ENCODE measurements at regions of chr16 and their contacts with region 1.

Region 1: GRCh38 chr16:87278191-87279095 is 38.7 kb downstream of the C16orf95 start:
- DNase-seq: peak; percentile 78 to 91
- ATAC-seq: peak; percentile 97 to 100
- H3K4me3 ChIP-seq: no peak overlapping the region
- H3K27ac ChIP-seq: peak overlapping the region in 1 of 2 experiments; percentile 2; a peak in 1 of 6 replicates
- H3K4me1 ChIP-seq: 0 out of 3 replicates have a peak, but pooled peaks cover 5% of the 10 kb centered on the region
- CTCF ChIP-seq: peak; percentile 85
- EP300 ChIP-seq: no peak
- POLR2A ChIP-seq: no peak
- RAD21 ChIP-seq: peak; percentile 93 to 96

Region 2: DNA sequence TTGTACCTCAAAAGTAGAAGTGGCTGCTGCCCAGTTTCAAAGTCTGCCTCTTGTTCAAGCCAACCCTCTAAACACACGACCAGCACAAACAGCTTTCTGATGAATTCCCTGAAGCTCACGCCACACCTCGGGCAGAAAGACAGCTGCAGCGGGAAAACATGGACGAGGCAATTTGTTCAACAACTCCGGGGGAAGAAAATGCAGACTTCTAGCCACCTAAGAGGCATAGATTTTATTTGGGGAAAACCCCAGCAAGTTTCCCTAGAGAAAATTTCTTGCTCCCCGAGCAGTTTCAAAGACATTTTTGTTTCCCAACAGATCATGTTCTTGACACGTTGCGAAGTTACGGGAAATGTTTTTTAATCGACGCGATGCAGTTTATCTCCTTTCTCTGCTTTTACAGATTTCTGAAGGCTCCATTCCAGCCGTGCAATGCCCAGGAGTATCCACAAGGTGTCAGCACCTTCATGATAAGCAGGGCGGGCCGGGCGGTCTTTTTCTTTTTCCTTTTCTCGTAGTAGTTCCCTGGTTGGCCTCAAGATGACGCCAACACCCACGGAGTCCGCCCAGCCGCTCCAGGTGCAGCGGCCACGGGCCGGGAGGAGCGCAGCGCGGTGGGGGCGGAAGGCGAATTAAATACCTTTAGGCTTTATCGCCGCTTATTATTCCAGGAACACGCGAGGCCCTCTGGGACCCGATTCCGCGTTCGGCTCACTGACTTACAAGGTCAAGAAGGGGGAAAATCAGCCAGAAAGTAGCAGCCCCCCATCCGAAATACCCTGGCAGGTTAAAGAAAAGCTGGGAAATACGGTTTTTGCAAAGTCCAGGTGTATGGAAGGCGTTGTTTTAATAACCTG is 714.7 kb before region 1 on chr16:
- CTCF ChIA-PET with region 1: interaction called, 80 read pairs
- POLR2A ChIA-PET with region 1: no interaction called
- DNase-seq: peak; percentile 50 to 86
- ATAC-seq: peak; percentile 51 to 87; a peak in 5 of 6 replicates
- H3K4me3 ChIP-seq: peak overlapping the region; percentile 42
- H3K27ac ChIP-seq: peak overlapping the region; percentile 71 to 79
- H3K4me1 ChIP-seq: peaks cover 9% of the 10 kb centered on the region; the same call in 1 of the 3 replicates
- CTCF ChIP-seq: peak; percentile 100
- EP300 ChIP-seq: no peak
- POLR2A ChIP-seq: no peak
- RAD21 ChIP-seq: peak; percentile 100

Region 3: DNA sequence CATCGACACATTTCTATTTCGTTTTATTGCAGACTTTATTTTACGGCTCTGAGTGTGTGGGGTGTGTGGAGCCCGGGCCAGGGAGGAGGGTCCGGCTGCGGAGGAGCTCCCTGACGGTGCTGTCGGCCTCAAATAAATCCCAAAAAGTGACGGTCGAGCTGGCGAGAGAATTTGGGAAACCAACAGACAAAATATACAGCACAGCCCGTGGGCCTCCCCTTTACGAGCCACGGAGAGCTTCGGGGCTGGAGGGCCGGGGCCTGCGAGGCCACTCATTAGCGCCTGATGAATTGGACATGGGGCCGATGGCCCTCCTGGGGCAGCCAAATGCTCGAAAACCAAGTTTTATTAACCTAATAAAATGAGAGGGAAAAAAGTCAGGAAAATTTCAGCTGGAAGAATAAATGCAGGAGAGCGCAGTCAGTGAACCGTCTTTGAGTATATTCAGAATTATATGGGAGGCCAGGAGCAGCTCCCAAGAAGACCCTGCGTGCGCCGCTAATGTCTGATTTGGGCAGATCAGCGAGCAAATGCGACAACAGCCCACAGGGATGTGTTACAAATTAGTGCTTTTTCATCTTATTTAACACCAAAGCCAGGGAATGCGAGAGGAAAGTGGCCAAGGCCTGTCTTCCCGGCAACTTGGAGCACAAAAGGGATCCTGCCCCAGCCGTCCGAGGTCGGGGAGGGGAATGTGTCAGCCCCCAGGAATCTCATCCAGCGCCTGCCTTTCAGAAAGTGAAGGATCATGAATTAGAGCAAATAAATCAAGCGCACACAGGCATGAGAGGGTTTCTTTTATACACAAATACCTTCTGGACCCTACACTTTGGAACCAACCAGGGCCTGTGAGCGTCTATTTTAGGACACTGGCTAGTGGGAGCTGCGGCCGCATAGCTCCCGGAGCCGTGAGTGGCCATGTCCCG is 210.3 kb before region 1 on chr16:
- CTCF ChIA-PET with region 1: interaction called, 51 read pairs
- POLR2A ChIA-PET with region 1: no interaction called
- DNase-seq: no peak
- ATAC-seq: no peak
- H3K4me3 ChIP-seq: no peak overlapping the region
- H3K27ac ChIP-seq: no peak overlapping the region
- H3K4me1 ChIP-seq: no peaks in the 10 kb centered on the region
- CTCF ChIP-seq: no peak
- EP300 ChIP-seq: no peak
- POLR2A ChIP-seq: no peak
- RAD21 ChIP-seq: no peak

Region 4: DNA sequence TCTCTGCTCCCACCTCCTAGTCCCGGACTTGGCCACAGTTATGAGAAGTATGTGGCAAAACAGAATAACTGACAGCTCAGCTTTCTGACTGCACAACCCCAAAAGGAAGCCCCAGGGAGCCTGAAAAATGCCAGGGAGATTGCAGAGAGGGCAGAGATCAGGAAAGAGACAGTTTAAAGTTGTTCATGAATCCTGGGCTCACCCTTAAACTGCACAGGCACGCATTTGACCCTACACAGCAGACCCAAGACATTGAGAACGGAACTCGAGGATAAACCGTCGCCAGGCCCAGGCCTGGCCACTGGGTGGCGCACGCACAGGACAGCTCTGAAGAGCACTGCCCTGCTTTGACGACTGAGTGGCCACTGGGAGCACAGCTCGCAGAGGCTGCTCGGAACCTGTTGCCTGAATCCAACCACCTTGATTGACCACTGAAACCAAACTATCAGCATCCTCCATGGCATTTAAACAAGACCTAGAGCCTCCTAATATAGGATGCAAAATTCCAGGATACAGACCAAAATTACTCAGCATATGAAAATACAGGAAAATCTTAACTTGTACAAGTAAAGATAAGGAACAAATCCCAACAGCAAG is 75.3 kb before region 1 on chr16:
- CTCF ChIA-PET with region 1: interaction called, 73 read pairs
- POLR2A ChIA-PET with region 1: no interaction called
- DNase-seq: peak; percentile 84 to 91
- ATAC-seq: peak; percentile 80 to 92
- H3K4me3 ChIP-seq: no peak overlapping the region
- H3K27ac ChIP-seq: peak overlapping the region in 1 of 2 experiments; percentile 69; a peak in 3 of 6 replicates
- H3K4me1 ChIP-seq: peaks cover 30% of the 10 kb centered on the region
- CTCF ChIP-seq: peak; percentile 92
- EP300 ChIP-seq: no peak
- POLR2A ChIP-seq: no peak
- RAD21 ChIP-seq: peak; percentile 73 to 74

Region 5: DNA sequence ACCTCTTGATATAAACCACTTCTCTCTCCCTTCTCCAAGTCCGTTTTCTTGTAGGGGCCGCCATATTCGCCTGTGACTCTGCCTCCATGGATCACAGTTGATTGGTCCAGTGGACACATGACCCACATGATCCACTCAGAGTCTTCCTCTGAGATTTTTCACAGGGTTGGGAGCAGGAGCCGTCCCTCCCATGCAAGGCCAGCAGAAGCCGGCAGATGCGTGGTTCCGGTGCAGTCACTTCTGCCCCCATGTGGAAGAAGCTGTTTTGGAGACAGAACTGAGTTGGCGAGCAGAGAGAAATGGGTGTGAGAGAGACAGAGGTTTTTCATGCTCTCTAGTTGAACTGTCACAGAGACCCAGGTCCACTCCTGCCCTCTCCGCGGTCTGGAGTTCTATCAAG is 44.5 kb before region 1 on chr16:
- CTCF ChIA-PET with region 1: interaction called, 16 read pairs
- POLR2A ChIA-PET with region 1: no interaction called
- DNase-seq: peak in 1 of 2 experiments; percentile 36
- ATAC-seq: peak; percentile 51 to 69; a peak in 4 of 6 replicates
- H3K4me3 ChIP-seq: no peak overlapping the region
- H3K27ac ChIP-seq: no peak overlapping the region
- H3K4me1 ChIP-seq: no peaks in the 10 kb centered on the region
- CTCF ChIP-seq: no peak
- EP300 ChIP-seq: no peak
- POLR2A ChIP-seq: no peak
- RAD21 ChIP-seq: peak; percentile 27 to 55; a peak in 3 of 5 replicates

Region 6: DNA sequence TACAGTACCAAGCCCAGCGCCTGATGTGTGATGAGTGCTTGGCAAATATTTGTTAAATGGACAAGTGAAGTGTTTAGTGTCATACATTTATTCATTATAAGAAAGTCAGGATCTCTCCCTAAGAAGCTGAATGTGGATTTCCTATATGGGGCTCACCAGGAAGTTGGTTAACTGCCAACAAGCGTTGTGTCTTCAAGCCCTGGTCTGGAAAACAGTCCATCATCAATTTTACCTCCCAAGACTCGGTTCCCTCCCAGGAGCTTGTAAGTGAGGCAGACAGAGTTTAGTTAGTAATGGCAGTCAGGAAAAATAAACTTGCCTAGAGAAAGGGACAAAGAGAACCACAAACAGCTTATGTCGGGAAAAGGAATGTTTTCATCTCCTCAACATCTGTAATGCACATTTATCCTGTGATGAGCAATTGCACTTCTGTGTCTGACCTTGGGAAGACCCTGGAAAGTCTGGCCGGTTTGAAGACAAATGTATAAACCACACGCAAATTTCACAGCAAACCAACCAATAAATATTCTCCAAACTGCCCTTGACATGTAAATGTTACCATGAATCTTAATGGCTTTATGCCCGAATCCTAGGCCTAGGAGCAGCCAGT is 10.4 kb after region 1 on chr16:
- CTCF ChIA-PET with region 1: interaction called, 46 read pairs
- POLR2A ChIA-PET with region 1: no interaction called
- DNase-seq: no peak
- ATAC-seq: no peak
- H3K4me3 ChIP-seq: no peak overlapping the region
- H3K27ac ChIP-seq: no peak overlapping the region
- H3K4me1 ChIP-seq: no peaks in the 10 kb centered on the region
- CTCF ChIP-seq: no peak
- EP300 ChIP-seq: no peak
- POLR2A ChIP-seq: no peak
- RAD21 ChIP-seq: no peak

Region 7: GRCh38 chr16:87305505-87306391 is 27.3 kb after region 1 on chr16:
- CTCF ChIA-PET with region 1: interaction called, 15 read pairs
- POLR2A ChIA-PET with region 1: no interaction called
- DNase-seq: no peak
- ATAC-seq: peak in 1 of 2 experiments; percentile 69; a peak in 3 of 6 replicates
- H3K4me3 ChIP-seq: no peak overlapping the region
- H3K27ac ChIP-seq: no peak overlapping the region
- H3K4me1 ChIP-seq: no peaks in the 10 kb centered on the region
- CTCF ChIP-seq: no peak
- EP300 ChIP-seq: no peak
- POLR2A ChIP-seq: no peak
- RAD21 ChIP-seq: no peak

Region 8: DNA sequence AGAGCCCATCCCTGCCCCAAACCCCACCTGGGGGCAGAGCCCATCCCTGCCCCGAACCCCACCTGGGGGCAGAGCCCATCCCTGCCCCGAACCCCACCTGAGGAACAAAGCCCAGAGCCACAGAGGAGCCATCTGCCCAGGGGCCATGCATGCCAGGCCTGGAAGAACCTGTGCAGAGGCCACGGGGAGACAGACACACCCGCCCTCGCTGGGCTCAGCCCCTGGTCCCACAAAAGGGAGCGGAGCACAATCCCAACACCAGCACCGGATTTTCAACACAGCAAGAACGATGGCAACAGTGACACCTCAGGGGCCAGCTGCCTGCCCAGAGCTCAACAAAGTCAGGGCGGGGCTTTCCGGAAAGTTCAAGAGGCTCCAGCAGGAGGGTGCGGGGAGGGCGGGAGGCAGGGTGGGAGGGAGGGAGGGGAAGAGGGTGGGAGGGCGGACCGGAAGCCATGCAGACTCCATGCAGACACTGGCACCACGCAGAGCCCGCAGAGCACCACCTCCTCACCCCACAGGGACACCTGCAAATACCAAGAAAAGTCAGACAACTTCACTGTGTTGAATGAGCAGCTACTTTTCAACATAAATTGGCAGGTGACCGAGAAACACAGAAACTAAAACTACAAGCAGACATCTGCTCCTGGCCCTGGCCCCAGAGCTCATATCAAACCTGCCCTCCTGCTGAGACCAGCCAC is 66.6 kb after region 1 on chr16:
- CTCF ChIA-PET with region 1: no interaction called
- POLR2A ChIA-PET with region 1: no interaction called
- DNase-seq: no peak
- ATAC-seq: no peak
- H3K4me3 ChIP-seq: no peak overlapping the region
- H3K27ac ChIP-seq: no peak overlapping the region
- H3K4me1 ChIP-seq: no peaks in the 10 kb centered on the region
- CTCF ChIP-seq: no peak
- EP300 ChIP-seq: no peak
- POLR2A ChIP-seq: no peak
- RAD21 ChIP-seq: no peak

Region 9: DNA sequence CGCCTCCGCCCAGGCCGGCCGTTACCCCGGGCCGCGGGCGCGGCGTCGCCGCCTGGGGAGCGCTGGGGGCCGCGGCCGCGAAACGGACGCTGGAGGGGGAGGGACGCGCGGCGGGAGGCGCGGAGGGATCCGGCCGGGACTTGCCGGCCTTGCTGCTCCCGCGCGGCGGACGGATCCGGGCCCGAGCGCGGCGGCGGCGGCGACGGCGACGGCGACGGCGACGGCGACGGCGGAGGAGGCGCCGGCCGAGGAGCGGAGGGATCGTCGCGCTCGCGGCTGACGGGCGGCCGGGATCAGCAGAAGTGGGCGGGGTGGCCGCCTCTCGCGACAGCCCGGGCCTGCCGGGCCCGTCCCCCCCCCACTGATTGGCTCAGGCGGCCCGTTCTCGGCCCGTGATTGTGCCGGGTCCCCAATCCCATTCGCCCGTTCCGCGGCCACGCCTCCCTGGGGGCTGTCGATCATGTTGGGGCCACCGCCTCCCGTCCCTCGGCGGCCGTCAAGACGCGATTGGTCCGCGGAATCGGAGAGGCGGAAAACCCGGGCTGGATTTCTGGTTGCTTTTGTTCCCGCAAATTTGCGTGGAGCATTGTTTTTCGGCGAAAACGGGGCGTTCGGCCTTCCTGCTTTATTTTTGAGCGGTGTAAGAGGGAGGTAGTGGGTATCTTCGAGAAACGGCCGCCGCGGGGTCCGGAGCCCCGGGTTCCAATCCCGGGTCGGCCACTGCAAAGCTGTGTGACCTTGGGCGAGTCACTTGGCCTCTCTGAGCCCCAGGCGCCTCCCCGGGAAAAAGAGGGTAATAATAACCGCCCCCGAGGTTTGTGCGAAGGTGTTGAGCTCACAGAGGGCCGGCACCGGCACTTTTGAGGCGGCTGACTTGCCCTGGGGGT is 214.5 kb after region 1 on chr16 and contains the start of gene ZCCHC14:
- CTCF ChIA-PET with region 1: no interaction called
- POLR2A ChIA-PET with region 1: no interaction called
- DNase-seq: peak; percentile 98
- ATAC-seq: peak; percentile 93 to 99
- H3K4me3 ChIP-seq: peak within 1 kb of the TSS; percentile 86
- H3K27ac ChIP-seq: peak within 1 kb of the TSS; percentile 89 to 98
- H3K4me1 ChIP-seq: peaks cover 26% of the 10 kb centered on the region
- CTCF ChIP-seq: no peak
- EP300 ChIP-seq: no peak
- POLR2A ChIP-seq: peak; percentile 70
- RAD21 ChIP-seq: no peak
- polyA plus RNA-seq, gene ZCCHC14: 3.8 and 5.5 TPM in 2 replicates